ENCODE measurements at regions of chr5 and their contacts with region 1.

Region 1: GRCh38 chr5:17132444-17133083 is 84.9 kb upstream of the BASP1 start:
- DNase-seq: no peak
- H3K4me3 ChIP-seq: peak overlapping the region in 1 of 4 donors; percentile 2
- H3K27ac ChIP-seq: peak overlapping the region in 3 of 4 donors; percentile 49 to 65 (median 51)
- H3K4me1 ChIP-seq: peaks cover 0 to 15% (median 3%) of the 10 kb centered on the region in 4 donors
- H3K27me3 ChIP-seq: no peaks in the 10 kb centered on the region
- CTCF ChIP-seq: peak; percentile 66 to 81 (median 70)
- EP300 ChIP-seq: no peak
- POLR2A ChIP-seq: no peak

Region 2: DNA sequence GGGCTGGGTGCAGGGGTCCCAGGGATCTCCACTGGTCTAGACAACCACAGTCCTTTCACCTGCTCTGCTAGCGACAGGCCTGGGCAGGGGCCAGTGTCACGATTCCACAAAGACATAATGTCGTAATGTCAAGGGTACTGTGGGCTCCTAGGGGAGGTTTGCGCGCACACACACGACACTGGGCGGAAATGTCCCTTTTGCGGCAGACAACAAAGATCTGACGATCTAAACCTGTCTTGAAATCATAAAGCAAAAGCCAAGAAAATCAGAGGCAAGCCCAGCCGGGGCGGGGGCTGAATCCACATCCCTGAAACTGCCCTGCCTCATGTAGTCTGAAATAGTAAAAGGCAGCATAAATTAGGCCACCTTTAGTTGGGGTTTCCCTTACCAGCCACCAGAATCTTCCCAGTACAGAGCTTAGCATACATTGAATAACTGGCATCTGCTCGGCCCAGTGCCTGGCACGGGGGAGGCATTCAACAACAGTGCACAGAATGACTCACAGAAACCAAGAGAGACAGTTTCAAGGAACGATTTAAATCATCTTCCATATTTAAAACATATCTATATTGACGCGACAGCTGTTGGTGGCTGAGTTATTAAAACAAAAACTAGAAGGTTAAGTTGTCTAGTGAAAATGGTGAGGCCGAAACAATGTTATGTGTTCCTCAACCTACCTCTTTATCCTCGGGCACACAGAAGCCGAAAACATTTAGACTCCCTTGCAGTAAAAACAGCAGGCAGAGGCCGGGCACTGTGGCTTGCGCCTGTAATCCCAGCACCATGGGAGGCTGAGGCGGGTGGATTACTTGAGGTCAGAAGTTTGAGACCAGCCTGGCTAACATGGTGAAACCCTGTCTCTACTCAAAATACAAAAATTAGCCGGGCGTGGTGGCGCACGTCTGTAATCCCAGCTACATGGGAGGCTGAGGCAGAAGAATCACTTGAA is 347.4 kb before region 1 on chr5:
- in situ Hi-C with region 1: no loop called
- intact Hi-C with region 1: loop called (anchors 10 kb)
- DNase-seq: no peak
- H3K4me3 ChIP-seq: no peak overlapping the region
- H3K27ac ChIP-seq: no peak overlapping the region
- H3K4me1 ChIP-seq: no peaks in the 10 kb centered on the region
- H3K27me3 ChIP-seq: no peaks in the 10 kb centered on the region
- CTCF ChIP-seq: no peak
- EP300 ChIP-seq: no peak
- POLR2A ChIP-seq: no peak

Region 3: DNA sequence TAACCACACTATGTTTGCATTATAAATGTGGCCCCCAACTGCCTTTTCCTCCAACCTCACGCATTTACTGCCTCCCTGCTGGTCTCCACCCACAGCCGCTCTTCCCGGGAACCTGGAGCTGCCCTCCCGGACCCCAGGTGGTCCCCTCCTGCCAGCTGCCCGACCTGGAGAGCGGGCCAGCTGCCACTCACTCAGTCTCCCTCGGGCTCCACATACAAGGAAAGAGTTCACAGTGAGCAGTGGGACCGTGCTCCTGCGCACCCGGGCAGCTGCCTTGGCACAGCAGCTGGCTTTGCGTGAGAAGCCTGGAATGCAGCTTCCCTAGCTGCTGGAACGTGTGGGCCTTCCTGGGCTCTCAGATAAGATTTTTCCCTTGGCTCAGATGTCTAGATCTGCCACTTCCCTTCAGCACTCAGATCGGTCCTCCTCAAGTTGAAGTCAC is 265.7 kb before region 1 on chr5:
- in situ Hi-C with region 1: no loop called
- intact Hi-C with region 1: no loop called
- DNase-seq: peak; percentile 36
- H3K4me3 ChIP-seq: no peak overlapping the region
- H3K27ac ChIP-seq: peak overlapping the region; percentile 60 to 61 (median 60)
- H3K4me1 ChIP-seq: peaks cover 8 to 28% (median 17%) of the 10 kb centered on the region in 4 donors
- H3K27me3 ChIP-seq: no peaks in the 10 kb centered on the region
- CTCF ChIP-seq: no peak
- EP300 ChIP-seq: no peak
- POLR2A ChIP-seq: no peak

Region 4: GRCh38 chr5:16934123-16934522 is 198.4 kb before region 1 on chr5:
- in situ Hi-C with region 1: loop called in 1 of 4 experiments (anchors 25 kb)
- intact Hi-C with region 1: no loop called
- DNase-seq: peak; percentile 79
- H3K4me3 ChIP-seq: peak overlapping the region in 3 of 4 donors; percentile 77 to 88 (median 78)
- H3K27ac ChIP-seq: peak overlapping the region in 3 of 4 donors; percentile 89 to 92 (median 91)
- H3K4me1 ChIP-seq: peaks cover 0 to 49% (median 36%) of the 10 kb centered on the region in 4 donors
- H3K27me3 ChIP-seq: peaks cover 53% of the 10 kb centered on the region
- CTCF ChIP-seq: peak; percentile 74 to 87 (median 82)
- EP300 ChIP-seq: no peak
- POLR2A ChIP-seq: no peak

Measured in transverse colon (tissue), 4 donors.